Activated CD4-positive, alpha-beta T cell treated with anti-CD3 and anti-CD28 coated beads, Interleukin-2, amount 10 ng/mL, durations not matched to agents 24 days and 14 days (primary cell): ENCODE measurements at regions of chr9 and their contacts with region 1.

Region 1: GRCh38 chr9:125143375-125144090 is at the start of gene SCAI:
- DNase-seq: peak; percentile 99
- H3K4me3 Mint-ChIP-seq: peak within 1 kb of the TSS; percentile 100
- H3K27ac Mint-ChIP-seq: peak within 1 kb of the TSS; percentile 95
- H3K4me1 Mint-ChIP-seq: peaks cover 33% of the 10 kb centered on the region
- H3K27me3 Mint-ChIP-seq: no peaks in the 10 kb centered on the region
- total RNA-seq, gene SCAI: 11.0 and 13.4 TPM in 2 replicates

Region 2: DNA sequence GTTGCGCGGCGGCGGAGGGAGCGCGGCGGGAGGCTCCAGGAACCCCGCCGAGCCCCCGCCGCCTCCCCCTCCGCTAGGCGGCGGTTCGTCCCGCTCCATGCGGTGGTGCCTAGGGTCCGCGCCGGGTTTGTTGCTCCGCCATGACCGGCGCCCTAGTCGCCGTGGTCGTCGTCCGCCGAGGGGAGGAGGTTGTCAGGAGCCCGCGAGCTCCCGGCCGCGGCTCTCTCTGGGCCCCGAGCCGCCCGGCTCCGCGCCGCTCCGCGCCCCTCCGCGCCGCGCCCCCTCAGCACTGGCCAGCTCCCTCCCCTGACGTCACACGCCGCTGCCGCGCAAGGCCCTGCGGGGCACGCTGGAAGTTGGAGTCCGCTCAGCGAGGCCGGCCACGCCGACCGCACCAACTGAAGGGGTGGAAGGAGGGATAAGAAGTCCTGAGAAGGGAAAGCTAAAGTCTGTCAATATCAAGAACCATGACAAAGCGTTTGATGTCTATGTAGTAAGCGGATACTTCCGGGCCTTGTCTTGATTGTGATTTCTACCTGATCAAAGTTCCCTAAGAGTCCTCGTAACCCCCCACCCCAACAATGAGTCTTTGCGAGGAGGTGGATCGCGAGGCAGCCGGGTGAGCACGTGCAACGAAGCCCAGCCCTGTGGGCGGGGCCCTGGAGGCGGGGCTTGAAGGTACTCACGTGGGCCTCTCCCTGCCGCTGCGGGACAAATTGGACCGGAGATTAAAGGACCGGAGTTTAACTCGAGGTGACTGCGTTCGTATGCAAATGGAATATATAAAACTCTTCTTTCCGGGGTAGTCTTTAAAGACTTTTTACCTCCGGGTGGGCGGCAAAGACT is 372.3 kb before region 1 on chr9 and contains the start of gene NR6A1:
- intact Hi-C with region 1: loop called (anchors 2 kb)
- DNase-seq: peak; percentile 99
- H3K4me3 Mint-ChIP-seq: peak within 1 kb of the TSS; percentile 91
- H3K27ac Mint-ChIP-seq: peak within 1 kb of the TSS; percentile 94
- H3K4me1 Mint-ChIP-seq: peaks cover 44% of the 10 kb centered on the region
- H3K27me3 Mint-ChIP-seq: peaks cover 63% of the 10 kb centered on the region
- total RNA-seq, gene NR6A1: 2.3 and 2.7 TPM in 2 replicates

Region 3: DNA sequence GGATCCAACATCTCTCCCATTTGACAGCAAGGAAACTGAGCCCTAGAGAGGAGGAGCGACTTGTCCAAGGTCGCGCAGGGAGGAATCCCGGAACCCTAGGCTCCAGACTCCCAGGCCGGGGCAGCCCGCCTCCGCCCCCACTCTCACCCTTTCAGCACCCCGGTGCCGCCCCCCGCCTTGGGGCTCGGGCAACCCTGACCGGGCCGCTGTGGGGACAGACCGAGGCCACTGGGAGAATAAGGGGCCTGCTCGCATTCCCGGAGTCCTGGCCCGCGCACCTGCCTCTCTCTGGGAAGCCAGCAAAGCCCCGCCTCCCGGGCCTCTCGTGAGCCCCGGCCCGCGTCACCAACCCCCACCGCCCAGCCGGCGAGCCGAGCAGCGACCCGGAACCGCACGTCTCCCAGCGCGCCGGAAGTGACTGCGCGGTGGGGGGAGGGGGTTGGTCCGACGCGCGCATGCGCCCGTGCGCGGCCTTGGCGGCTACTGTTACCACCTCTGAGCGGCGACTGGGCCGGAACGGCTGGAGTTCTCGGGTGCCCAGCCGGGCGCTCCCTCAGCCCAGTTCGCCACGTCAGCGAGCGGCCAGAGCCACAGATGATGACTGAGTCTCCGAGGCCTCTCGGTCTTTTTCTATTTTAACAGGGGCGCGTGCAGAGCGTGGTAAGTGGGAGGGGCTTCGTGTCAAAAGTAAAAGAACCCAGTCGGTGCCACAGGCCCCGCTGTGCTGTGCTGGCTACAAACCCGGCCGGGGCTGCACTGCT is 202.7 kb before region 1 on chr9 and contains the start of gene GOLGA1:
- intact Hi-C with region 1: loop called (anchors 1 kb)
- DNase-seq: peak; percentile 98
- H3K4me3 Mint-ChIP-seq: peak within 1 kb of the TSS; percentile 95
- H3K27ac Mint-ChIP-seq: peak within 1 kb of the TSS; percentile 99
- H3K4me1 Mint-ChIP-seq: peaks cover 21% of the 10 kb centered on the region
- H3K27me3 Mint-ChIP-seq: no peaks in the 10 kb centered on the region
- total RNA-seq, gene GOLGA1: 17.3 and 19.3 TPM in 2 replicates

Region 4: GRCh38 chr9:125119643-125120286 is 23.8 kb before region 1 on chr9:
- intact Hi-C with region 1: loop called (anchors 1 kb)
- DNase-seq: peak; percentile 69
- H3K4me3 Mint-ChIP-seq: no peak overlapping the region
- H3K27ac Mint-ChIP-seq: peak overlapping the region; percentile 20
- H3K4me1 Mint-ChIP-seq: peaks cover 28% of the 10 kb centered on the region
- H3K27me3 Mint-ChIP-seq: no peaks in the 10 kb centered on the region

Region 5: GRCh38 chr9:125172031-125172755 is 28.7 kb after region 1 on chr9:
- intact Hi-C with region 1: no loop called
- DNase-seq: no peak
- H3K4me3 Mint-ChIP-seq: no peak overlapping the region
- H3K27ac Mint-ChIP-seq: no peak overlapping the region
- H3K4me1 Mint-ChIP-seq: peaks cover 20% of the 10 kb centered on the region
- H3K27me3 Mint-ChIP-seq: no peaks in the 10 kb centered on the region

Region 6: GRCh38 chr9:125189361-125190289 is 46.1 kb after region 1 on chr9 and contains the start of gene PPP6C:
- intact Hi-C with region 1: loop called (anchors 2 kb)
- DNase-seq: peak; percentile 99
- H3K4me3 Mint-ChIP-seq: peak within 1 kb of the TSS; percentile 98
- H3K27ac Mint-ChIP-seq: peak within 1 kb of the TSS; percentile 96
- H3K4me1 Mint-ChIP-seq: peaks cover 30% of the 10 kb centered on the region
- H3K27me3 Mint-ChIP-seq: no peaks in the 10 kb centered on the region
- total RNA-seq, gene PPP6C: 48.1 and 52.5 TPM in 2 replicates

Region 7: GRCh38 chr9:125346080-125346732 is 202.7 kb after region 1 on chr9:
- intact Hi-C with region 1: no loop called
- DNase-seq: no peak
- H3K4me3 Mint-ChIP-seq: no peak overlapping the region
- H3K27ac Mint-ChIP-seq: no peak overlapping the region
- H3K4me1 Mint-ChIP-seq: no peaks in the 10 kb centered on the region
- H3K27me3 Mint-ChIP-seq: no peaks in the 10 kb centered on the region

Region 8: GRCh38 chr9:125549465-125549871 is 405.9 kb after region 1 on chr9:
- intact Hi-C with region 1: no loop called
- DNase-seq: no peak
- H3K4me3 Mint-ChIP-seq: no peak overlapping the region
- H3K27ac Mint-ChIP-seq: no peak overlapping the region
- H3K4me1 Mint-ChIP-seq: no peaks in the 10 kb centered on the region
- H3K27me3 Mint-ChIP-seq: no peaks in the 10 kb centered on the region